Activated CD4-positive, alpha-beta memory T cell treated with anti-CD3 and anti-CD28 coated beads for 36 hours (primary cell): ENCODE measurements at regions of chr13 and their contacts with region 1.

Region 1: GRCh38 chr13:20418953-20419352 is 106.7 kb downstream of the CRYL1 start:
- DNase-seq: no peak
- H3K4me3 Mint-ChIP-seq: no peak overlapping the region
- H3K27ac Mint-ChIP-seq: peak overlapping the region; percentile 19
- H3K4me1 Mint-ChIP-seq: peaks cover 42% of the 10 kb centered on the region
- H3K27me3 Mint-ChIP-seq: no peaks in the 10 kb centered on the region

Region 2: GRCh38 chr13:19587635-19588300 is 831.2 kb before region 1 on chr13:
- CTCF ChIA-PET with region 1: no interaction called
- POLR2A ChIA-PET with region 1: no interaction called
- intact Hi-C with region 1: loop called (anchors 2 kb)
- DNase-seq: peak; percentile 30
- H3K4me3 Mint-ChIP-seq: peak overlapping the region; percentile 68
- H3K27ac Mint-ChIP-seq: peak overlapping the region; percentile 88
- H3K4me1 Mint-ChIP-seq: peaks cover 22% of the 10 kb centered on the region
- H3K27me3 Mint-ChIP-seq: no peaks in the 10 kb centered on the region

Region 3: GRCh38 chr13:20219577-20219976 is 199.4 kb before region 1 on chr13:
- CTCF ChIA-PET with region 1: no interaction called
- POLR2A ChIA-PET with region 1: no interaction called
- intact Hi-C with region 1: loop called (anchors 2 kb)
- DNase-seq: no peak
- H3K4me3 Mint-ChIP-seq: peak overlapping the region; percentile 24
- H3K27ac Mint-ChIP-seq: peak overlapping the region; percentile 49
- H3K4me1 Mint-ChIP-seq: peaks cover 19% of the 10 kb centered on the region
- H3K27me3 Mint-ChIP-seq: peaks cover 4% of the 10 kb centered on the region

Region 4: DNA sequence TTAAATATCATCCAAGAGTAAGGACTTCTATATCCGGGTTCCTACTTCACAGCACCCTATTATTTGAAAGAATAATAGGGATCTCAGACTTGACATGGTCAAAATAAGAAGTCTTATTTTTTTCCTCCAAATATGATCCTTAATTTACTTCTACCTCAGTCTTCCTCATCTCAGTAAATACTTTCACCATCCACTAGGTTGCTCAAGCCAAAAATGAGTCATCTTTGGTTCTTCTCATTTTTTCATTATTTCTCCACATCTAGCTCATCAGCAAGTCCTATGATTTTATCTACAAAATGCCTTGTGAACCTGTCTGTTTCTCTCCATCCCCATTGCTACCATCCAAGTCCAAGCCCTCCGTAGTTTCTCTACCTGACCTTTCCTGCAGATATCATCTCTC is 65.0 kb before region 1 on chr13:
- CTCF ChIA-PET with region 1: interaction called, 3 read pairs
- POLR2A ChIA-PET with region 1: interaction called, 3 read pairs
- intact Hi-C with region 1: loop called (anchors 2 kb)
- DNase-seq: no peak
- H3K4me3 Mint-ChIP-seq: no peak overlapping the region
- H3K27ac Mint-ChIP-seq: no peak overlapping the region
- H3K4me1 Mint-ChIP-seq: peaks cover 2% of the 10 kb centered on the region
- H3K27me3 Mint-ChIP-seq: no peaks in the 10 kb centered on the region

Region 5: DNA sequence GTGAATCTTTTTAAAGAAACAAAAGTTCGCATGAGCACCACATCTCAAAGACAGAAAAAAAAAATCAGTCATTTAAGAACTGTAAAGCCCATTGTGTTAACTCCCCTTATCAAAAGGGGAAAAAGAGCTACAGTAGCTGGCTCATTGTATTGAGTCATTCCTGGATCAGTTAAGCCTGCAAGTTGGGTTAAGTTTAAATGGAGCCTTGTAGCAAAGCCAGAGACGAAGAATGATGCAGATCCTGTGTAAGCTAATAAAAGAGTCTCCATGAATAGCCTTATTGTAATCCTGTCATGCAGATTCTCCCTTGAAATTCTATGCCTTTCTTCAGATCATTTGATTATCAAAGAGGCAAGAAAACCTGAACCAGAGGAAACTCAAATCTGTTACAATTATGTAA is 22.9 kb after region 1 on chr13:
- CTCF ChIA-PET with region 1: no interaction called
- POLR2A ChIA-PET with region 1: no interaction called
- intact Hi-C with region 1: loop called (anchors 1 kb)
- DNase-seq: no peak
- H3K4me3 Mint-ChIP-seq: no peak overlapping the region
- H3K27ac Mint-ChIP-seq: no peak overlapping the region
- H3K4me1 Mint-ChIP-seq: peaks cover 12% of the 10 kb centered on the region
- H3K27me3 Mint-ChIP-seq: no peaks in the 10 kb centered on the region

Region 6: GRCh38 chr13:20475927-20476691 is 57.2 kb after region 1 on chr13:
- CTCF ChIA-PET with region 1: interaction called, 7 read pairs
- POLR2A ChIA-PET with region 1: interaction called, 7 read pairs
- intact Hi-C with region 1: loop called (anchors 1 kb)
- DNase-seq: peak; percentile 83
- H3K4me3 Mint-ChIP-seq: peak overlapping the region; percentile 57
- H3K27ac Mint-ChIP-seq: peak overlapping the region; percentile 84
- H3K4me1 Mint-ChIP-seq: peaks cover 45% of the 10 kb centered on the region
- H3K27me3 Mint-ChIP-seq: no peaks in the 10 kb centered on the region